ENCODE measurements at regions of chr16 and their contacts with region 1.

Region 1: DNA sequence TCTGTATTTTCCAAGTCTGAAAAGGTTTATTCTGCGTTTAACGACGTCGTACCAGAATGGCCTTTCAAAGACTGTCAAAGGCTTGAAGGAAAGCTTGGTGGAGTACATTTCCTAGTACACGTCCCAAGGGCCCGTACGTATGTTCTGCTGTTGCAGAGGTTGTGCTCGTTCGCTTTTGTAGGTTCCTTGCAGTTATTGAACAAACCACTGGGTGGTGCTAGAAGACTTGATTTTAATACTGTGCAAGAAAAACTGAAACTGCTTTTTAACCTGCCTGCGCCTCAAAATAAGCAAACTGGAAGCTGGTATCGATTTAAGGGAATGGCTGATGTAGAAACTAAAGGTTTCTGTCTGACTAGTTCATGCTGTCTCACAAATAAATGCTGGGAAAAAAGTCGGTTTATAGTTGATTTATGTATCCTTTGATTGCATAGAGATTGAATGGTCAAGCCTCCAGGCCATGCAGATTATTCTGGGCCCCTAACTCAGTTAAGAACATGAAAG is 54.6 kb downstream of the USP10 start:
- DNase-seq: peak; percentile 87
- H3K4me3 Mint-ChIP-seq: no peak overlapping the region
- H3K27ac Mint-ChIP-seq: no peak overlapping the region
- H3K4me1 Mint-ChIP-seq: peaks cover 86% of the 10 kb centered on the region
- H3K27me3 Mint-ChIP-seq: no peaks in the 10 kb centered on the region

Region 2: GRCh38 chr16:84532291-84532724 is 222.1 kb before region 1 on chr16:
- CTCF ChIA-PET with region 1: no interaction called
- intact Hi-C with region 1: no loop called
- DNase-seq: no peak
- H3K4me3 Mint-ChIP-seq: no peak overlapping the region
- H3K27ac Mint-ChIP-seq: no peak overlapping the region
- H3K4me1 Mint-ChIP-seq: peaks cover 9% of the 10 kb centered on the region
- H3K27me3 Mint-ChIP-seq: no peaks in the 10 kb centered on the region

Region 3: GRCh38 chr16:84633622-84634021 is 120.8 kb before region 1 on chr16:
- CTCF ChIA-PET with region 1: no interaction called
- intact Hi-C with region 1: no loop called
- DNase-seq: no peak
- H3K4me3 Mint-ChIP-seq: no peak overlapping the region
- H3K27ac Mint-ChIP-seq: no peak overlapping the region
- H3K4me1 Mint-ChIP-seq: peaks cover 42% of the 10 kb centered on the region
- H3K27me3 Mint-ChIP-seq: no peaks in the 10 kb centered on the region

Region 4: DNA sequence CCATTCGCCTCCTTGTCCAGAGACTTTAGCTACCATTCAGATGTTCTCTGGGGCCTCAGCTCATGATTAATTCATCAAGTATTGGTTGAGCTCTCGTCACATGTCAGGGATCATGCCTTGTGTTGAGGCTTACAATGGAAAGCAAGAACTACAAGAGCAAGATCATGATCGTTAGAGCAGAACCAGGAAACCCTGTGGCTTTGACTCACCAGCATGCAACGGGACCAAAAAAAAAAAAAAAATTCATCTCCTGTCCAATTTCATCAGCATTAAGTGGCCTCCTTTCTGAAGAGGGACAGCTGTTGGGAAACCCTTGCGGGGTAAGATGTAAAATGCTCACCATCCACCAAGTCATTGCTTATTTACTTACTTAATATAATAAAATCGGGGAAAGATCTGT is 66.7 kb before region 1 on chr16:
- CTCF ChIA-PET with region 1: no interaction called
- intact Hi-C with region 1: no loop called
- DNase-seq: peak; percentile 9
- H3K4me3 Mint-ChIP-seq: no peak overlapping the region
- H3K27ac Mint-ChIP-seq: no peak overlapping the region
- H3K4me1 Mint-ChIP-seq: peaks cover 4% of the 10 kb centered on the region
- H3K27me3 Mint-ChIP-seq: no peaks in the 10 kb centered on the region

Region 5: DNA sequence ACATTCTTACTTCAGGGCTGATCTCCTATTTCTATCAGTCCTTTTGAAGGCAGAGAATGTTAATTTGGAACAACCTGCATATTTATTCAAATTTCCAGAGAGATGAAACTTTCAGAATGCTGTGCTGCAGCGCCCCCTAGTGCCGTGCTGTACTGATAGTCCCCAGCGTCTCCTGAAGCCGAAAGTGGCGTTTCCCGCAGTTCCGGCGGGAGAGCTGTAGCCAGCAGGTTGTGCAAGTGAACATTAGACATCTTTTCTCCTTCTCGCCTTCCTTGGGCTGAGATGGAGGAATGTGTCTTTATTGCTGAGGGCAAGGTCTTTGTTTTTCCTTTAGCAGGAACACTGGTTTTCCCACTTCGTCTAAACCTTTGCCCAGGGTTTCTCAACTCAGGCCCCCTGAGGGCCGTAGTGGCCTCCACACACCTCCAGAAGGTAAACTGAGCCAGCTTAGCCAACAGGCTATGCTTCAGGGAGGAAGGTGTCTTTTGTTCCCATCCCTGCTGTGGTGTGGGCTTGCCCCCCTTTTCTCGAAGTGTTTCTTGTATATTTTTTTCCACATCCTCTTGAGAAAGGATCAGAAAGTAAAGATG is 28.2 kb before region 1 on chr16:
- CTCF ChIA-PET with region 1: interaction called, 24 read pairs
- intact Hi-C with region 1: no loop called
- DNase-seq: peak; percentile 91
- H3K4me3 Mint-ChIP-seq: no peak overlapping the region
- H3K27ac Mint-ChIP-seq: no peak overlapping the region
- H3K4me1 Mint-ChIP-seq: peaks cover 74% of the 10 kb centered on the region
- H3K27me3 Mint-ChIP-seq: no peaks in the 10 kb centered on the region

Region 6: DNA sequence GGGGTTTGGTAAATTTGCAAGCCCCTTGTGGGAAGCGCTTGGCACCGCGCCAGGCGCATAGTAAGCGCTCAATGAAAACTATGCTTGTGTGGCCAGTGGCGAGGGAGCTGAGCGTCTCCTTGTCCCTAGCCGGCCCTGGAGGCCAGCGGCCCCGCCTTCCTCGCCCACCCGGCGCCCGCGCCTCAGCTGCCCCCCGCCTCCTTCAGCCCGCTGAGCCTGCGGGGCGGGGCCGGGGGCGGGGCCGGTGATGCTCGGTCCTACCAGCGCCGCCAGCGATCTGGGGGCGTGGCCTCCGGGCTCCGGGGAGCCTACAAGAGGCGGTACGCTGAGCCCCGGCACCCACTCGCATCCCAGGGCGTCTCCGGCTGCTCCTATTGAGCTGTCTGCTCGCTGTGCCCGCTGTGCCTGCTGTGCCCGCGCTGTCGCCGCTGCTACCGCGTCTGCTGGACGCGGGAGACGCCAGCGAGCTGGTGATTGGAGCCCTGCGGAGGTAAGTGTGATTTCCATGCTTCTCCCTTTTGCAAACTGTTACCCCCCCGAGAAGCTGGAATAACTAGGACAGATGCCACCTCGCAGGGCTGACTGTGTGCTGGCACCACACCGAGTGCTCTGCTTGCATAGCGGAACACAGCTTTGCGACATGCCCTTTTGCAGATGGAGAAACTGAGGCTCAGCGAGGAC is 65.4 kb after region 1 on chr16 and contains the start of gene CRISPLD2:
- CTCF ChIA-PET with region 1: interaction called, 11 read pairs
- intact Hi-C with region 1: no loop called
- DNase-seq: peak; percentile 87
- H3K4me3 Mint-ChIP-seq: peak within 1 kb of the TSS; percentile 62
- H3K27ac Mint-ChIP-seq: no peak within 1 kb of the TSS
- H3K4me1 Mint-ChIP-seq: peaks cover 13% of the 10 kb centered on the region
- H3K27me3 Mint-ChIP-seq: peaks cover 5% of the 10 kb centered on the region
- total RNA-seq, gene CRISPLD2: 0.14 TPM in 1 of 2 experiments, not detected in the other

Region 7: DNA sequence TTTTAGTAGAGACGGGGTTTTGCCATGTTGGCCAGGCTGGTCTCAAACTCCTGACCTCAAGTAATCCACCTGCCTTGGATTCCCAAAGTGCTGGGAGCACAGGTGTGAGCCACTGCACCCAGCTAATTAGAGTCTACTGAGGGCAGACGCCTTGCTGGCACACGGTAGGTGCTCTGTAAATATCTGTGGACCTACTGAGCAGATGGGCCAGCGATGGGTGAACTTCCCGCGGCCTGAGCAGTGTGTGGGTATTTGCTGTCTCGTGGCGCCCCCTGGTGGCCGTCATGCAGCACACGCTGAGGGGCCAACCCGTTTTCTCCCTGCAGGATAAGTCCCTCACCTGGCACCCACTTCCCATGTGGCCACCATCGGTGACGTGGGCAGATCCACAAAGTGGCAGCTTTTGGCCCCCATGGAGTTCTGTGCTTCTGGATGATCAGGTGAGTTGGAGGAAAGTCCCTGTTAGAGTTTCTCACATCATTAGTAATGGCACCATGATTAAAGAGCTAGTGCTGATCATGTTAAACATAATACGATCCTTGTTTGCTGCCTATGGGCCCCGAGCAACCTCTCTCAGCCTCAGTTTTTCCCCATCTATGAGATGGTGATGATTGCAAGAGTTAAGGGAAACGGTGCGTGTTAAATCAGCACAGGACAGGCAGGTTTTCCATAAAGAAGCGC is 216.2 kb after region 1 on chr16:
- CTCF ChIA-PET with region 1: interaction called, 52 read pairs
- intact Hi-C with region 1: loop called (anchors 1 kb)
- DNase-seq: peak; percentile 86
- H3K4me3 Mint-ChIP-seq: no peak overlapping the region
- H3K27ac Mint-ChIP-seq: no peak overlapping the region
- H3K4me1 Mint-ChIP-seq: peaks cover 5% of the 10 kb centered on the region
- H3K27me3 Mint-ChIP-seq: no peaks in the 10 kb centered on the region

Region 8: GRCh38 chr16:85137323-85138072 is 383.1 kb after region 1 on chr16:
- CTCF ChIA-PET with region 1: no interaction called
- intact Hi-C with region 1: no loop called
- DNase-seq: no peak
- H3K4me3 Mint-ChIP-seq: no peak overlapping the region
- H3K27ac Mint-ChIP-seq: no peak overlapping the region
- H3K4me1 Mint-ChIP-seq: peaks cover 2% of the 10 kb centered on the region
- H3K27me3 Mint-ChIP-seq: peaks cover 33% of the 10 kb centered on the region

Measured in activated naive CD4-positive, alpha-beta T cell treated with anti-CD3 and anti-CD28 coated beads for 36 hours (primary cell).